ENCODE measurements at regions of chr9 and their contacts with region 1.

Region 1: DNA sequence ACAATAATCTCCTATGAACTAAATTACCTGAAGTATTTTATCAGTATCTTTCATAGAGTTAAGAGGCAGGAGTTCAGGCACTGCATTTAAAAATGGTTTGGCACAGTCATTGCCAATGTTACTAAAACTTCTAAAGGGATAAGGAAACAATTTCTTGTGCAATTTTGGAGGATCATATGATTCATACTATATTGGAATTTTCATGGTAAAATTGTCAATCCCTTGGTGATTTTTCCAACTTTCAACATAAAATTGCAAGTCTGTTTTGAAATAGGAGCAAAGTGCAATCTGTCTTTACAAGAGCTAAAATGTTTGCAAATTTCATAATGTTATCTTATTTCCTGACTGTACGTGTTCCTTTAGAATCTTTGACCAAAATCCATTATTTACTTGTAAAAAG is 211.1 kb downstream of the DMRTA1 start:
- DNase-seq: no peak
- ATAC-seq: no peak
- H3K4me3 ChIP-seq: no peak overlapping the region
- H3K27ac ChIP-seq: no peak overlapping the region
- H3K4me1 ChIP-seq: no peaks in the 10 kb centered on the region
- H3K27me3 ChIP-seq: no peaks in the 10 kb centered on the region
- CTCF ChIP-seq: no peak

Region 2: GRCh38 chr9:22718653-22719052 is 60.9 kb after region 1 on chr9:
- intact Hi-C with region 1: loop called (anchors 5 kb)
- DNase-seq: no peak
- ATAC-seq: no peak
- H3K4me3 ChIP-seq: no peak overlapping the region
- H3K27ac ChIP-seq: no peak overlapping the region
- H3K4me1 ChIP-seq: no peaks in the 10 kb centered on the region
- H3K27me3 ChIP-seq: no peaks in the 10 kb centered on the region
- CTCF ChIP-seq: no peak

Measured in upper lobe of right lung (tissue), 1 donor.